Activated CD4-positive, alpha-beta T cell treated with anti-CD3 and anti-CD28 coated beads, Interleukin-2, amount 10 ng/mL, durations not matched to agents 24 days and 14 days (primary cell): ENCODE measurements at regions of chr12 and their contacts with region 1.

Region 1: DNA sequence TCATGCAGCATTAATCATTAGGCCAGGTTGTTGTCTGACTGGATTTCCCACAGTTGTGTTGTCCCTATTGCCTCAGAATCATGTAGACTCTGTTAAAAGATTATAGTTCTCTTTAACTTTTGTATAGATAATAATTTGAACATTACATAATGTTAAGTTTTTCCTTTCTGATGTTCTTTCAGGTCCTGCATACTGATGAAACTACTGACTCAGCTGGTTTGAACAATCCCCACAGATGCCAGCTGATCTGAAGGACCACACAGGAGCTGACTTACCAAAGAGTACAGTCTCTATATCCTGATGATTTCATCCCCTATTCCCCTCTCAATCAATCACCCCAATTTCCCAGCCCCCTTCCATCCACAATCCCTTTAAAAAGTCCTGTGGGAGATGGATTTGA is 341.2 kb upstream of the MGAT4C start:
- DNase-seq: no peak
- H3K4me3 Mint-ChIP-seq: no peak overlapping the region
- H3K27ac Mint-ChIP-seq: no peak overlapping the region
- H3K4me1 Mint-ChIP-seq: no peaks in the 10 kb centered on the region
- H3K27me3 Mint-ChIP-seq: no peaks in the 10 kb centered on the region

Region 2: GRCh38 chr12:86634456-86635410 is 37.3 kb after region 1 on chr12:
- intact Hi-C with region 1: loop called (anchors 1 kb)
- DNase-seq: no peak
- H3K4me3 Mint-ChIP-seq: no peak overlapping the region
- H3K27ac Mint-ChIP-seq: no peak overlapping the region
- H3K4me1 Mint-ChIP-seq: no peaks in the 10 kb centered on the region
- H3K27me3 Mint-ChIP-seq: no peaks in the 10 kb centered on the region